ENCODE measurements at regions of chr19 and their contacts with region 1.

Region 1: GRCh38 chr19:29724102-29724641 is 9.1 kb upstream of the C19orf12 start:
- DNase-seq: no peak
- H3K4me3 ChIP-seq: no peak overlapping the region
- H3K27ac ChIP-seq: no peak overlapping the region
- H3K4me1 ChIP-seq: no peaks in the 10 kb centered on the region
- CTCF ChIP-seq: no peak

Region 2: DNA sequence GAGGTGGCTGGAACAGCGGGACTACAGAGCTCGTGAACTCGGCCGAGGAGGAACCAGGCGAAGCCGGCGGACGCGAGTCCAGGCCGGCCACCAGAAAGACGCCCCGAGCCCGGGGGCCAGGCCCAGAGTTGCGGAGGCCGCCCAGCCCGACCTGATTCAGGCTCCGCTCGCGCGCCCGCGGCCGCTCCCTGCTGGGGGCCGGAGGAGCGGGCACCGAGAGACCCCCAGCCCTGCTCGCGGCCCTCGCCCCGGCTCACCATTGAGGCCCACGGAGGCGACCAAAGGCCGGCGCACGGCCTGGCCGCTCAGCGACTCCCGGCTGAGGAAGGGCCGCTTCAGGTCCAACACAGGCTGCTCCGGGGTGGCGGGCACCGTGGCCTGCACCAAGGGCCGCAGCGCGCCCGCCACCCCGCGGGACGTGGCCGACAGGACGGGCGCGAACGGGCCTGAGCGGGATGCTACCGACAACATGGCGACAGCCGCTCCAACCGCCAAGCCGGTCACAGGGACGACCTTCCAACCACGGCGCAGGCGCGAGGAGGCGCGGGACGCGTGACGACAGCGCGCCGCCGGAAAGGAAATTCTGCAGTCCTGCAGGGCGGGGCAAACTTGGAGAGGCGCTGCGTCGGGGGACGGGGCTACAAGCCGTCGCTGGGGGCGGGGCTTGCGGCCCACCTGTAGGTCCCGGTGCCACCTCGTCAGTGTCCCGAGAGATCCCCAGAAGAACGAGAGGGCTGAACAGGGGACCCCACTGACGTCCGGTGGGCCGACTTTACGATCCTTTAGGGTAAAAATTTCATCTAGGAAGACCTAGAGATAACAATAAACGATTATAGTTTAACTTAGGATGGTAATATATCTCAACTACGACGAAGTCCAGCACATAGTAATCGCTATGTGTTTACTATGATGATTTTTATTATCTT is 511.3 kb before region 1 on chr19 and contains the start of gene UQCRFS1:
- CTCF ChIA-PET with region 1: no interaction called
- POLR2A ChIA-PET with region 1: no interaction called
- intact Hi-C with region 1: loop called (anchors 10 kb)
- DNase-seq: peak; percentile 96
- H3K4me3 ChIP-seq: peak within 1 kb of the TSS; percentile 89
- H3K27ac ChIP-seq: peak within 1 kb of the TSS; percentile 68
- H3K4me1 ChIP-seq: peaks cover 27% of the 10 kb centered on the region
- CTCF ChIP-seq: no peak
- total RNA-seq, gene UQCRFS1: 32.6 and 40.6 TPM in 2 replicates

Region 3: GRCh38 chr19:29887442-29887855 is 163.3 kb after region 1 on chr19:
- CTCF ChIA-PET with region 1: no interaction called
- POLR2A ChIA-PET with region 1: no interaction called
- intact Hi-C with region 1: no loop called
- DNase-seq: peak; percentile 22
- H3K4me3 ChIP-seq: no peak overlapping the region
- H3K27ac ChIP-seq: no peak overlapping the region
- H3K4me1 ChIP-seq: no peaks in the 10 kb centered on the region
- CTCF ChIP-seq: 0 out of 2 replicates have a peak, but pooled peaks have one; percentile 18

Measured in OCI-LY7 (cell line).